Activated CD4-positive, alpha-beta T cell treated with anti-CD3 and anti-CD28 coated beads, Interleukin-2, amount 10 ng/mL, durations not matched to agents 24 days and 14 days (primary cell): ENCODE measurements at regions of chr1 and their contacts with region 1.

Region 1: DNA sequence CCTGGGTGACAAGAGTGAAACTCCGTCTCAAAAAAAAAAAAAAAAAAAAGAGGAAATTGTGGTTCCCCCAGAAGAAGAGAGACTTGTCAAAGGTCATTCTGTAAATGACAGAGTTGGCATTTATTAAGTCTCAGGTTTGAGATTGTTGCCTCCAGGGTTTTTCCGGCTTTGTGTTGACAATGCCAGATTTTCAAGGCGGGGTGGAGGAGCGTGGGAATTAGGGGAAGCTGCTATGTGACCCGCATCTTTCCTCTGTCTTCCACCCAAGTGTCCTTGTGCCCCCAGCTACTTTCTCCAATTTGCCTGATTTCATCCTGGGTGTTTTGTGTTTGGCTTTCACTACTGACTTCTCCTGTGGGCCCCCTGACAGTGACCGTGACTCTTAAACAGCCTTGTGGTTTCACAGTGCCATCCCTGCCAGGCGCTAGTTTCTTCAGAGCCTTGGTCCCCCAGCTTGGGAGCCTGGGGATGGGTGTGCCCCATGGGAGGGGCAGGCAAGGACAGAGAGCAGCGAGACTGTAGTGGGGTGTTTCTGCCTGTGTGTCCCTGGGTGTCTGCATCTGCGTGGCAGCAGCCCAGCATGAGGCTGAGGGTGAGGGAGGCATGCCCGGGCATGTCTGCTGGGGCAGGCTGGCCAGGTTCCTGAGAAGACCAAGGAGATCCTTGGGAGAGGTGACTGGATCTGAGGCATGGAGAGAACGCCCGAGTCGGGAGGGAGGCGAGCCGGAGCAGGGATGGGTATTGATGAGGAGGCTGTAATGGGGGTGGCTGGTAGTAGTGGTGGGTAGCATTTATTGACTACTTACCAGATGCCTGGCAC is 46.3 kb downstream of the IER5 start:
- DNase-seq: peak; percentile 79
- H3K4me3 Mint-ChIP-seq: peak overlapping the region; percentile 66
- H3K27ac Mint-ChIP-seq: peak overlapping the region; percentile 95
- H3K4me1 Mint-ChIP-seq: peaks cover 66% of the 10 kb centered on the region
- H3K27me3 Mint-ChIP-seq: no peaks in the 10 kb centered on the region

Region 2: DNA sequence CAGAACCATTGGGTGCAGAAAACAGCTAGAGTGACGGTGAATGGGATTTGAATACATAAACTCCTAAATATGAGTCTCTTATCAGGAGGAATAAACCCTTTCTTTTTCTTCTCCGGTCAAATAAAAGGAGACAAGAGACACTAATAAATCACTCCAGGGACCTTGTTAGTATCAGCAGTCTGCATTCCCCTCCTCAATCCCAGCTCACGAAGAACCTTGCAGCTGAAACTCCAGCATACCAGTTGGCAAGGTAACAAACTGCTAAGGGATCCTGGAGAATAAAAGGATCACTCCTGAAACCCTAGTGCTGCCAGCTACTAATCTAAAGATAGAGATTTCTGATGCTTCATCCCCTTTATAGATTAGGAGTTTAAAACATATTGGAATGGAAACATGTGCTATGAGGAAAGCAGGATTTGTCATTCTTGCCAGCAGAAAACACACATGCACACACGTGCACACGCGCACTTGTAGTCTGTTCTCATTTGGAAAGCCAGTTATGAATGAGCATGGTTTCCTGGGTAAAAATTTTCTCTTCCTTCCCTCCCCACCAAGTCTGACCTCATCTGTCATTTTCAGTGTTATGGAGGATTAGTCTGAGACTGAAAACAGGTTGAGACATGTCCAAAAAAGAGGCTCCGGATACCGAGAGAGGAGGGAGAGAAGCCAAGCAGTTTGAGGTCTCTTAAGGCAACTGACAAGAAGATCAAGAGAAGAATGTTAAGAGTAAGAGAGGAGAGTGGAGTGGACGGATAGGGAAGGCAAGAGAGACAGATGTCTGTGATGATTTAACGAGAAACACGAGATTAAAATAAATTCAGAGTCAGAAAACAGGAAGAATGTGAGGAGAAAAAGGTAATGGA is 35.4 kb before region 1 on chr1:
- intact Hi-C with region 1: loop called (anchors 1 kb)
- DNase-seq: peak; percentile 83
- H3K4me3 Mint-ChIP-seq: peak overlapping the region; percentile 79
- H3K27ac Mint-ChIP-seq: peak overlapping the region; percentile 96
- H3K4me1 Mint-ChIP-seq: peaks cover 83% of the 10 kb centered on the region
- H3K27me3 Mint-ChIP-seq: no peaks in the 10 kb centered on the region

Region 3: DNA sequence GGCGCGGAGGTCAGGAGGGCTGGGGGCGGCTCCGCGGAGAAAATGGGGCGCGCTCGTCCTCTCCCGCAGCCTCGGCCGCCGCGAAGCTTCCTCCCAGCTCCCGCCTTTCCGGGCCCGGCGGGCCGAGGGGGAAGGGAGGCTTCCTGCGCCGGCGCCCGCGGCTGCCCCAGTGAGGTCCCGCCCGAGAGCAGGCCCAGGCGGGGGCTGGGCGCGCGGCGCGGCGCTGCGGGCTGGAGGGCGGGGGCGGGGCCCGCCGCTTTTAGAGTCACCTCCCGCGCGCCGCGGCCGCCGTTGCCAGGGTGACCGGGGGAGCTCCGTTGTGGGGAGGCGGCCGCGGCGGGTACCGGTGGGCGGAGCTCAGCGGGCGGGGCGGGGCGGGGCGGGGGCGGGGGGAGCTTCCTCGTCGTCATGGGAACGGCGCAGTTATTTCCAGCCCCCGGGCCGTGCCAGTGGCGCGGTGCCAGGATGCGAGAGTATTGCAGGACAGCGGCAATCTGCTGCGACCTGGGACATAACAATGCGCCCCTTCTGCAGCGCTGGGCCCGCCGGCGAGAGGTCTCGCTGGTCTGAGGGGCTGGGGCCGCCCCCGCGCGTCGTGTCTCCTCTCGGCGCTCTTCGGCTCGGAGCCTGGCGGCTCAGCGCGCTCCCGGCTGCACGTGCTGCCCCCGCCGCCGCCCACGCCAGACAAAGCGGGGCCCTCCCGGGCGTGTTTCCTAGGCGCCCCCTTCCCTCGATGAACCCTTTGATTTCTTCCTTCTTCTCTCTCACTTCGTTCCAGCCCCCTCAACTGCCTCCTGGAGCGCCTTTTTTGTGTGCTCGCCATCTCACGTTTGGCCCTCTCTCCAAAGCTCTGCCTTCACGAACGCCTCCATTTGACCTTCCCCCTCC is 29.4 kb before region 1 on chr1:
- intact Hi-C with region 1: loop called (anchors 1 kb)
- DNase-seq: peak; percentile 97
- H3K4me3 Mint-ChIP-seq: peak overlapping the region; percentile 86
- H3K27ac Mint-ChIP-seq: peak overlapping the region; percentile 90
- H3K4me1 Mint-ChIP-seq: peaks cover 73% of the 10 kb centered on the region
- H3K27me3 Mint-ChIP-seq: peaks cover 40% of the 10 kb centered on the region

Region 4: GRCh38 chr1:181166377-181167196 is 31.8 kb after region 1 on chr1:
- intact Hi-C with region 1: no loop called
- DNase-seq: peak; percentile 93
- H3K4me3 Mint-ChIP-seq: peak overlapping the region; percentile 8
- H3K27ac Mint-ChIP-seq: no peak overlapping the region
- H3K4me1 Mint-ChIP-seq: peaks cover 3% of the 10 kb centered on the region
- H3K27me3 Mint-ChIP-seq: peaks cover 11% of the 10 kb centered on the region

Region 5: DNA sequence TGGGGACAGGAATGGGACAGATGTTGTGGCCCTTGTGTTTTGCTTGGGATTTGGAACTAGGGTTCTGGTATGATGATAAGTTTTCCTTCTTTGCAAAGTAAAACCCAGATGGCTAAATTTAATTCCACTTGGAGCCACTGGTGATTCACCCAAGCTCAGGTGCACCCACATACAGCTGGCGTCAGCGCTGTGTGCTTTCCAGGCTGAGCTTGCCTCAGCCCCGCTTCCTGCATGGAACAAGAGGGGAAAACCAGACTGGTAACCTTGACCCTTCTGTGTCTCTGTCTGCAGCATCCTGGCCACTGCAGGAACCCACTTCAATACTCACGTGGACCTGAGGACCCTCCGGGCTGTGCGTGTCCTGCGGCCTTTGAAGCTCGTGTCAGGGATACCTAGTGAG is 442.7 kb after region 1 on chr1:
- intact Hi-C with region 1: no loop called
- DNase-seq: no peak
- H3K4me3 Mint-ChIP-seq: no peak overlapping the region
- H3K27ac Mint-ChIP-seq: no peak overlapping the region
- H3K4me1 Mint-ChIP-seq: no peaks in the 10 kb centered on the region
- H3K27me3 Mint-ChIP-seq: peaks cover 7% of the 10 kb centered on the region